Aorta (tissue), 5 donors: ENCODE measurements at regions of chr13 and their contacts with region 1.

Region 1: DNA sequence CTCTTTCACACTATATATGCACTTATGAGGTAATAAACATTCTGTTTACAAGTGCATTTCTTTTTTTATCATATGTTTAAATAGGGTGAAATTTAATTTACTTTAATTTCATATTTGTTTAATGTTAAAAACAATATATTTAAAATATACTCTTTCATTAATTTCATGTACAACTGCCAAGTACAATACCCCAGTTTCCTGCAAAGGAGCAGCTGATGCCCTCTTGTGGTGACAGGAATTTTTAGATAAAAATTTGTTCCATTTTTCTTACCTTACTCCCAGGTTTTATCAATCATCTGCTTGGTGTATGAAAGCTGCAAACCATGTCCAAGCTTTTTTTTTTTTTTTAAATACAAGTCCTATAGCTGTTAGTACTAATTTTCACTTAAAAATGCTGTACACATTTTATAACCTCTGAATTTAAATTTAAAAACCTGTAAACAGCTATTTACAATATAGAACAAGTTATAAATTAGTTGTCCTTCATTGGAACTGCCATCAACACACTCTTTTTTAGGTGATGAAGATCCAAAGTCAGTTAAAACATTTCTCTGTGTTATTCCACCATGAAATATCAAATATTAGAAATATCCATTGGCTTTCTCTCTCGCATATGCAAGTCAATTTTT is 4.9 kb downstream of the PCDH20 start:
- DNase-seq: no peak
- ATAC-seq: no peak
- H3K4me3 ChIP-seq: no peak overlapping the region
- H3K27ac ChIP-seq: no peak overlapping the region
- H3K4me1 ChIP-seq: no peaks in the 10 kb centered on the region
- H3K27me3 ChIP-seq: no peaks in the 10 kb centered on the region

Region 2: GRCh38 chr13:60448907-60449510 is 961.8 kb before region 1 on chr13:
- intact Hi-C with region 1: loop called in 1 of 2 experiments (anchors 10 kb)
- DNase-seq: no peak
- ATAC-seq: peak; percentile 73
- H3K4me3 ChIP-seq: no peak overlapping the region
- H3K27ac ChIP-seq: no peak overlapping the region
- H3K4me1 ChIP-seq: no peaks in the 10 kb centered on the region
- H3K27me3 ChIP-seq: no peaks in the 10 kb centered on the region

Region 3: GRCh38 chr13:60627071-60627686 is 783.6 kb before region 1 on chr13:
- intact Hi-C with region 1: loop called in 1 of 2 experiments (anchors 10 kb)
- DNase-seq: no peak
- ATAC-seq: no peak
- H3K4me3 ChIP-seq: no peak overlapping the region
- H3K27ac ChIP-seq: no peak overlapping the region
- H3K4me1 ChIP-seq: no peaks in the 10 kb centered on the region
- H3K27me3 ChIP-seq: no peaks in the 10 kb centered on the region

Region 4: GRCh38 chr13:61128850-61129645 is 281.7 kb before region 1 on chr13:
- intact Hi-C with region 1: loop called in 1 of 2 experiments (anchors 5 kb)
- DNase-seq: no peak
- ATAC-seq: no peak
- H3K4me3 ChIP-seq: no peak overlapping the region
- H3K27ac ChIP-seq: no peak overlapping the region
- H3K4me1 ChIP-seq: no peaks in the 10 kb centered on the region
- H3K27me3 ChIP-seq: no peaks in the 10 kb centered on the region

Region 5: GRCh38 chr13:61765181-61765742 is 354.5 kb after region 1 on chr13:
- intact Hi-C with region 1: no loop called
- DNase-seq: peak in 1 of 2 donors; percentile 68
- ATAC-seq: no peak
- H3K4me3 ChIP-seq: no peak overlapping the region
- H3K27ac ChIP-seq: no peak overlapping the region
- H3K4me1 ChIP-seq: no peaks in the 10 kb centered on the region
- H3K27me3 ChIP-seq: no peaks in the 10 kb centered on the region